Panc1 (cell line): ENCODE measurements at regions of chr16 and their contacts with region 1.

Region 1: GRCh38 chr16:20383106-20384029 is 21.2 kb downstream of the PDILT start:
- DNase-seq: peak; percentile 62
- ATAC-seq: peak; percentile 90
- H3K4me3 ChIP-seq: no peak overlapping the region
- H3K27ac ChIP-seq: no peak overlapping the region
- H3K4me1 ChIP-seq: no peaks in the 10 kb centered on the region
- H3K27me3 ChIP-seq: peaks cover 2% of the 10 kb centered on the region; the same call in 1 of the 2 replicates
- CTCF ChIP-seq: peak; percentile 90

Region 2: DNA sequence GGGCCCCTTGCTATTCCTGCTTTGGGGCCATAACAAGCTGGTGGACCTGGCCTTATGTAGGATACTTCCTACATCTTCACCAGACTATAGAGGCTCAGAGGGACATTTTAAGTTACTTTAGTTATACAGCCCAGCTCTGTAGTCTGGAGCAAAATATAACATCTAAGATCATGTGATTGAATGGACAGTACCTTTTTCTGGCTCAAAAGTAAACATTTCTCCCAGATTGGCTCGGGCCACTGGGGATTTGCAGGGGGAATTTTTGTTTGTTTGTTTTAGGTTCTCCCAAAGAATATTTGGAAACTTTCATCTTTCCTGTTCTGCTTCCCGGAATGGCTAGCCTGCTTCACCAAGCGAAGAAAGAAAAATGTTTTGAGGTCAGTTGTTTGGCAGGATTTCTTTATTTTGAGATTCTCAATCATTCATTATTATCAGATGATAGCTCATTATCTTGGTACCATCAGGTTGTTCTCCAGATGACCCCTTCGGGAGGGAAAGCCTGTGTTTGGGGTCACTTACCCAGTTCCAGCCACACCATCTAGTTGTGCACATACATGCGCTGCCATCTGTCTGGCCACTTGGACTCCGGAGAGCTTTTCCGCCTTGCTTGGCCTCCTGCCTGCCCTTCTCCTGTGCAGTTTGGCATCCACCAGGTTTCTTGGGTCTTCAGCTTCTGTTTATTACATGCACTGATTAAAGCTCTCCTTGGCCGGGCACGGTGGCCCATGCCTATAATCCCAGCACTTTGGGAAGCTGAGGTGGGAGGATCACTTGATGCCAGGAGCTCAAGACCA is 648.1 kb before region 1 on chr16:
- CTCF ChIA-PET with region 1: interaction called, 12 read pairs
- POLR2A ChIA-PET with region 1: no interaction called
- in situ Hi-C with region 1: no loop called
- intact Hi-C with region 1: no loop called
- DNase-seq: no peak
- ATAC-seq: no peak
- H3K4me3 ChIP-seq: no peak overlapping the region
- H3K27ac ChIP-seq: no peak overlapping the region
- H3K4me1 ChIP-seq: no peaks in the 10 kb centered on the region
- H3K27me3 ChIP-seq: no peaks in the 10 kb centered on the region
- CTCF ChIP-seq: no peak

Region 3: GRCh38 chr16:19898924-19899604 is 484.3 kb before region 1 on chr16:
- CTCF ChIA-PET with region 1: interaction called, 28 read pairs
- POLR2A ChIA-PET with region 1: no interaction called
- in situ Hi-C with region 1: no loop called
- intact Hi-C with region 1: loop called (anchors 1 kb)
- DNase-seq: peak; percentile 74
- ATAC-seq: peak; percentile 87
- H3K4me3 ChIP-seq: no peak overlapping the region
- H3K27ac ChIP-seq: no peak overlapping the region
- H3K4me1 ChIP-seq: no peaks in the 10 kb centered on the region
- H3K27me3 ChIP-seq: no peaks in the 10 kb centered on the region; the same call in 1 of the 2 replicates
- CTCF ChIP-seq: peak; percentile 95

Region 4: DNA sequence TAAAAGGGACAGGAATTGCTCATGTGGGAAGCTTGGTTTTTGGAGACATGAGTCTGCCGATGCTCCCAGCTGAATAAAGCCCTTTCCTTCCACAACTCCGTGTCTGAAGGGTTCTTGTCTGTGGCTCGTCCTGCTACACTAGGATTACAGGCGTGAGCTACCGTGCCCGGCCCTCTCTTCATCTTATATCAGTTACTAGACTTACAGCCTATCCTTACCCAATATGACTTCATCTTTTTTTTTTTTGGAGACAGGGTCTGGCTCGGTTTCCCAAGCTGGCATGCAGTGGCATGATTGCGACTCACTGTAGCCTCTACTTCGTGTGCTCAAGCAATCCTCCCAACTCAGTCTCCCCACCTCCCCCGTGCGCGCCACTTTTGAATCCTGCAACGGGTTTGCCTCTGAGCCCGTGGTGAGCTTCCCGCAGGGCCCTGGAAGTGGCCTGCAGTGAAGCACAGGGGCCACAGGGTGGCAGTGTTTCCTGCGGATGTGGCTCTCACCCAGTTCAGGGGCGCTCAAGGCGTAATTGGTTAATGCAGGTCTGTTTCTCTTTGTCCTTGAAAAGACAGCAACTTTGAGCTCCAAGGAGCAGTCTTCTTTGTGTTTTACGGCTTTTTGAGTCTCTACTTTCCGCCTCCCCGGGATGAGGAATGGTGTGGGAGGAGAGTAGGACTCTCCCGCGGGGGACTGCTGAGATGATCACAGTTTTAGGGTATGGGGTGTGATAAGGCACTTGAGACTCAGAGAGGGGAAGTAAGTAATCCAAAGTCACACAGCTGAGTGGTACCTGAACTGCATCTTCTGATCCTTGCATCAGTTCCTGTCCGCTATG is 476.0 kb before region 1 on chr16:
- CTCF ChIA-PET with region 1: interaction called, 31 read pairs
- POLR2A ChIA-PET with region 1: no interaction called
- in situ Hi-C with region 1: no loop called
- intact Hi-C with region 1: loop called (anchors 1 kb)
- DNase-seq: peak; percentile 65
- ATAC-seq: peak; percentile 99
- H3K4me3 ChIP-seq: no peak overlapping the region
- H3K27ac ChIP-seq: no peak overlapping the region
- H3K4me1 ChIP-seq: no peaks in the 10 kb centered on the region
- H3K27me3 ChIP-seq: no peaks in the 10 kb centered on the region
- CTCF ChIP-seq: peak; percentile 98

Region 5: GRCh38 chr16:19980632-19981265 is 402.6 kb before region 1 on chr16:
- CTCF ChIA-PET with region 1: interaction called, 7 read pairs
- POLR2A ChIA-PET with region 1: no interaction called
- in situ Hi-C with region 1: no loop called
- intact Hi-C with region 1: loop called (anchors 5 kb)
- DNase-seq: no peak
- ATAC-seq: no peak
- H3K4me3 ChIP-seq: no peak overlapping the region
- H3K27ac ChIP-seq: no peak overlapping the region
- H3K4me1 ChIP-seq: no peaks in the 10 kb centered on the region
- H3K27me3 ChIP-seq: peaks cover 4% of the 10 kb centered on the region
- CTCF ChIP-seq: peak; percentile 81

Region 6: GRCh38 chr16:20306401-20306800 is 77.0 kb before region 1 on chr16:
- CTCF ChIA-PET with region 1: interaction called, 9 read pairs
- POLR2A ChIA-PET with region 1: no interaction called
- in situ Hi-C with region 1: no loop called
- intact Hi-C with region 1: loop called (anchors 5 kb)
- DNase-seq: no peak
- ATAC-seq: no peak
- H3K4me3 ChIP-seq: no peak overlapping the region
- H3K27ac ChIP-seq: no peak overlapping the region
- H3K4me1 ChIP-seq: no peaks in the 10 kb centered on the region
- H3K27me3 ChIP-seq: peaks cover 13% of the 10 kb centered on the region
- CTCF ChIP-seq: no peak

Region 7: DNA sequence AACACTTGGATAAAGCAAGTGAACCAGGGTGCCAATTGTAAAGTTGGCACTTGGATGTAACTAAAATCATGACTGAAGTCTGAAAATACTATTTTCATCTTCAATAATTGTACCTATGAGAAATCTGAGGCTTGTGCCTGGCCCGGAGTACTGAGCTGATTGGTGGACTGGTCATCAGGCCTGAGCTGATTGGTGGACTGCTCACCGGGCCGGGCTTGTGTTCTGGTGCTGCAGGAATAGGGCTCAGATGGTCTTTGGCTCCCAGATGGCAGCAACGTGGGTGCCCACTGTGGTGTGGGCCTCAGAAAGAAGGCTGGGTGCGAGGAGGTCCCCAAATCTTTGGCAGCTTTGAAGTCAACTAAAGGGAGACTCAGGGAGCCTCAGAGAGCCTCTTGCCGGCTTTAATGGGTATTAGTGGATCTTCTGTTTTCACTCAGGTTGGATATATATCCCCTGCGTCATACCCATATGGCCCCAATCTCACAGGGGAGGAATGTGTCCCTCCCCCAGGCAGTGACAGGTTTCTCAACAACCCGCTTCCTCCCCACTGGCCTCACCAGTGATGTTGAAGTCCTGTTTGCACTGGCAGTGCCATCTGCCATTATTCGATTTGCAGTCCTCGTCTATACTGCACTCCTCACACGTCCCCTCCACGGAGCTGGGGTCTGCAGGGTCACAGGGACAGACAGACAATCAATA is 35.6 kb before region 1 on chr16:
- CTCF ChIA-PET with region 1: no interaction called
- POLR2A ChIA-PET with region 1: no interaction called
- in situ Hi-C with region 1: no loop called
- intact Hi-C with region 1: no loop called
- DNase-seq: no peak
- ATAC-seq: no peak
- H3K4me3 ChIP-seq: no peak overlapping the region
- H3K27ac ChIP-seq: no peak overlapping the region
- H3K4me1 ChIP-seq: no peaks in the 10 kb centered on the region
- H3K27me3 ChIP-seq: peaks cover 4% of the 10 kb centered on the region; the same call in 1 of the 2 replicates
- CTCF ChIP-seq: no peak